Mammary epithelial cell (primary cell): ENCODE measurements at regions of chr1 and their contacts with region 1.

Region 1: GRCh38 chr1:53381790-53382401 is 54.0 kb upstream of the LRP8 start:
- DNase-seq: peak; percentile 77
- H3K4me3 ChIP-seq: no peak overlapping the region
- H3K27ac ChIP-seq: no peak overlapping the region
- H3K4me1 ChIP-seq: peaks cover 11% of the 10 kb centered on the region
- H3K27me3 ChIP-seq: peaks cover 2% of the 10 kb centered on the region
- CTCF ChIP-seq: no peak

Region 2: DNA sequence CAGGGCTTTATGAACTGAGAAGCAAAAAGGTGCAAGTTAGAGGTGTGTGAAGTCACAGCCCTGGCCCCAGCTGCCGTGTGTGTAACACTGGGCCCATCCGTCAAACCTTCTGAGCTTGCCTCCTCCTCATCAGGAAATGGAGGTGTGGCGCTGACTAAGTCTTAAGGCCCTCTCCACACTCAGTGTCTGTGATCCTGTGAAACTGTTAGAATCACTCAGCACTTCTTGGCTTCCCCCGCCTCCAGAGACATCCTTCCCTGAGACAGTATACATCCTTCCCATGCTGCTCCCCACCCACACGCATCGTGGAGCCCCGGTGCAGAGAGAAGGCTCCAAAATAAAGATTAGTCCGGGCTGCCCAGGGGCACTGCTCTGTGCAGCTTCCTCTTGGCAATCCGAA is 87.3 kb before region 1 on chr1:
- CTCF ChIA-PET with region 1: no interaction called
- dilution Hi-C with region 1: loop called (anchors 5 kb)
- in situ Hi-C with region 1: no loop called
- intact Hi-C with region 1: no loop called
- DNase-seq: peak; percentile 67
- H3K4me3 ChIP-seq: no peak overlapping the region
- H3K27ac ChIP-seq: no peak overlapping the region
- H3K4me1 ChIP-seq: peaks cover 36% of the 10 kb centered on the region
- H3K27me3 ChIP-seq: no peaks in the 10 kb centered on the region
- CTCF ChIP-seq: no peak

Region 3: GRCh38 chr1:53326088-53326597 is 55.8 kb before region 1 on chr1:
- CTCF ChIA-PET with region 1: no interaction called
- dilution Hi-C with region 1: loop called (anchors 5 kb)
- in situ Hi-C with region 1: no loop called
- intact Hi-C with region 1: loop called (anchors 2 kb)
- DNase-seq: peak; percentile 97
- H3K4me3 ChIP-seq: peak overlapping the region; percentile 52 to 85 (median 75)
- H3K27ac ChIP-seq: peak overlapping the region; percentile 78
- H3K4me1 ChIP-seq: peaks cover 20% of the 10 kb centered on the region
- H3K27me3 ChIP-seq: no peaks in the 10 kb centered on the region
- CTCF ChIP-seq: no peak

Region 4: GRCh38 chr1:53430261-53430660 is 48.4 kb after region 1 on chr1:
- CTCF ChIA-PET with region 1: no interaction called
- dilution Hi-C with region 1: loop called (anchors 5 kb)
- in situ Hi-C with region 1: no loop called
- intact Hi-C with region 1: no loop called
- DNase-seq: no peak
- H3K4me3 ChIP-seq: no peak overlapping the region
- H3K27ac ChIP-seq: no peak overlapping the region
- H3K4me1 ChIP-seq: no peaks in the 10 kb centered on the region
- H3K27me3 ChIP-seq: peaks cover 2% of the 10 kb centered on the region
- CTCF ChIP-seq: no peak

Region 5: GRCh38 chr1:53562291-53562980 is 180.5 kb after region 1 on chr1:
- CTCF ChIA-PET with region 1: no interaction called
- dilution Hi-C with region 1: no loop called
- in situ Hi-C with region 1: no loop called
- intact Hi-C with region 1: no loop called
- DNase-seq: no peak
- H3K4me3 ChIP-seq: no peak overlapping the region
- H3K27ac ChIP-seq: no peak overlapping the region
- H3K4me1 ChIP-seq: no peaks in the 10 kb centered on the region
- H3K27me3 ChIP-seq: peaks cover 6% of the 10 kb centered on the region
- CTCF ChIP-seq: no peak

Region 6: DNA sequence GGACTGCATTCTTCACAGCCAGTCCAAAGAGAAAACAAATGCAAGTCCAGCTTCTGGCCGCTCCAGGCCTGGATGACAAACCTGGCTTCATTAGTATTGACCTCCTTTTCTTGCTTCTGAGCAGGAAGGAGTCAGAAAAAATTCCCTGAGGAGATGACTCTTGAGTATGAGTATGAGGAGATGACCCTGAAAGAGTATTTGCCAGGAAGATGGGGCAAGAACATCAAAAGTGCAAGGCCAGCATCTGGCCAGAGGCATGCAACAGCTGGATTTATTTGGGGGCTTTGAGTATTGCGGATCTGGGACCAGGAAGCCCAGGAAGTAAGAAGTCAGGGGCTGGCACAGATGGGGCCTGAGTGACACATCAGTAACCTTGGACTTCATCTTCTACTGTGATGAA is 243.2 kb after region 1 on chr1:
- CTCF ChIA-PET with region 1: no interaction called
- dilution Hi-C with region 1: no loop called
- in situ Hi-C with region 1: no loop called
- intact Hi-C with region 1: no loop called
- DNase-seq: no peak
- H3K4me3 ChIP-seq: no peak overlapping the region
- H3K27ac ChIP-seq: no peak overlapping the region
- H3K4me1 ChIP-seq: no peaks in the 10 kb centered on the region
- H3K27me3 ChIP-seq: no peaks in the 10 kb centered on the region
- CTCF ChIP-seq: no peak